H1 (cell line): ENCODE measurements at regions of chr12 and their contacts with region 1.

Region 1: DNA sequence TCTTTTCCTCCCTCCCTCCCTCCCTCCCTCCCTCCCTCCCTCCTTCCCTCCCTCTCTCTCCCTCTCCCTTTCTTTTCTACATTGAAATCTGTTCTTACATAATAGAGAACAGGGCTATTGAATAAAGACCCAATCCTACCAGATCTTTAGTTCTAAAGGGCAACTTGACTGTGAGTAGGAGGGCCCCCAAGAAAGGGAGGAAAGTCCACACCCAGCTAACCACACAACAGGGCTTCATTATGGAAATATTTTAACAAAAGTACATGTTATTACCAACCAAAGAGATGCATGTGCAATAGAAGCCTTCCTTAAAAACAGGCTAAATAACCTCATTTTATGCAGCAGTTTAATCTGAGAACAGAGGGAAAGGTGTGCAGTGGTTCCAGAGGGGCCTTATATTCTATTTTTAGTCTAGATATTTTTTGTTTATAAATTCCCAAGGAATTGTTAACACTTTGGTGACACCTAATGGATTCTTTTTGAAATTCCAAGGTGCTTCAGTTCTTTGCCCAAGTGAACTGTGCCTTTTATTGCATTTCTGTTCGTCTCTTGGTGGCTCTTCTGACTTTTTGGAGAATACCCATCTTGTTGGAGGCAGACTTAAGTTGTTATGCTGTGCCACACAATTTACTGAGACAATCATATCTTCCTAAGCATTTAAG is 63.0 kb downstream of the GNS start:
- DNase-seq: no peak
- H3K4me3 ChIP-seq: no peak overlapping the region
- H3K27ac ChIP-seq: no peak overlapping the region
- H3K4me1 ChIP-seq: peaks cover 4 to 30% (median 20%) of the 10 kb centered on the region in 4 experiments
- H3K27me3 ChIP-seq: no peaks in the 10 kb centered on the region
- CTCF ChIP-seq: peak in 2 of 3 experiments; percentile 5 to 19; a peak in 1 of 4 replicates
- EP300 ChIP-seq: no peak
- POLR2A ChIP-seq: no peak
- RAD21 ChIP-seq: peak; percentile 48 to 60

Region 2: DNA sequence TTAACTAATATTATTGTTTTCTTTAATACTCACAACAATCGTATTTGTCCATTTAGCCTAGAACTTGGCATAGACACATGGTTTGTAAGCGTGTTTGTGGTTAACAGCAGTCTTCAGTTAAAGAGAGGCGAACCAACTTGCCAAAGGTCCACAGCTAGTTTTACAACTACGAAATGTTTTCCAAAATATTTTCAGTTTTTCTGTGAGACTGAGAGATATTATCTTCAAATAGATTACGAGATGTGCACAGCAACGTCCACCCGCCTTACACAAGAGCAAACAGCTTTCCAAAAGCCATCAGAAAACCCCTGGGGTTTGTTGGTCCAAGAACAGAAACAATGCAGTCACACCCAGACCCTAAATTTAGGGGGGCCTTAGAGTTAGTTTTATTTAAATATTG is 144.5 kb before region 1 on chr12:
- CTCF ChIA-PET with region 1: interaction called, 132 read pairs
- POLR2A ChIA-PET with region 1: no interaction called
- DNase-seq: no peak
- H3K4me3 ChIP-seq: no peak overlapping the region
- H3K27ac ChIP-seq: no peak overlapping the region
- H3K4me1 ChIP-seq: no peaks in the 10 kb centered on the region; a peak in 3 of 7 replicates
- H3K27me3 ChIP-seq: no peaks in the 10 kb centered on the region
- CTCF ChIP-seq: no peak
- EP300 ChIP-seq: no peak
- POLR2A ChIP-seq: no peak
- RAD21 ChIP-seq: no peak

Region 3: GRCh38 chr12:64566732-64567399 is 129.3 kb before region 1 on chr12:
- CTCF ChIA-PET with region 1: interaction called, 33 read pairs
- POLR2A ChIA-PET with region 1: interaction called, 3 read pairs
- DNase-seq: peak in 1 of 2 experiments; percentile 48
- H3K4me3 ChIP-seq: no peak overlapping the region
- H3K27ac ChIP-seq: no peak overlapping the region
- H3K4me1 ChIP-seq: peaks cover 5 to 15% (median 11%) of the 10 kb centered on the region in 4 experiments; a peak in 6 of 7 replicates
- H3K27me3 ChIP-seq: no peaks in the 10 kb centered on the region
- CTCF ChIP-seq: no peak
- EP300 ChIP-seq: no peak
- POLR2A ChIP-seq: no peak
- RAD21 ChIP-seq: no peak

Region 4: DNA sequence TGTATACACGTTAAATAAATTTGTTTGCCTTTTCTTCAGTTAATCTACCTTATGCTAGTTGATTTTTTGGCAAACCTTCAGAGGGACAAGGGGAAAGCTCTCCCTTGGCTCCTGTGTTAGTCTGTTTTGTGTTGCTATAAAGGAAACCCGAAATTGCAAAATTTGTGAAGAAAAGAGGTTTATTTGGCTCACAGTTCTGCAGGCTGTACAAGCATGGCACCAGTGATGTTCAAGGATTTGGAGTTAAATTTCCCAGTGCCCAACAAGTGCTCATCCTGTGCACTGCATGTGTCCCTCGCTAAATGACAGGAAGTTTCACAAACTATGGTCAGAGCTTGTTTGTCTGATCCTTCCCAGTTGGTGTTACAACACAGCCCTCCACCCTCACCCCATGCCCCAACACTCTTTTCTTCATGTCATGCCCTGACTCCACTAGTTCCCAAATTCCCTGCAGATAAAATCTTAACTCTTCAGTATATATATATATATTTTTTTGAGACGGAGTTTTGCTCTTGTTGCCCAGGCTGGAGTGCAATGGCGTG is 99.9 kb before region 1 on chr12:
- CTCF ChIA-PET with region 1: interaction called, 12 read pairs
- POLR2A ChIA-PET with region 1: no interaction called
- DNase-seq: no peak
- H3K4me3 ChIP-seq: no peak overlapping the region
- H3K27ac ChIP-seq: no peak overlapping the region
- H3K4me1 ChIP-seq: no peaks in the 10 kb centered on the region
- H3K27me3 ChIP-seq: no peaks in the 10 kb centered on the region
- CTCF ChIP-seq: no peak
- EP300 ChIP-seq: no peak
- POLR2A ChIP-seq: no peak
- RAD21 ChIP-seq: no peak

Region 5: DNA sequence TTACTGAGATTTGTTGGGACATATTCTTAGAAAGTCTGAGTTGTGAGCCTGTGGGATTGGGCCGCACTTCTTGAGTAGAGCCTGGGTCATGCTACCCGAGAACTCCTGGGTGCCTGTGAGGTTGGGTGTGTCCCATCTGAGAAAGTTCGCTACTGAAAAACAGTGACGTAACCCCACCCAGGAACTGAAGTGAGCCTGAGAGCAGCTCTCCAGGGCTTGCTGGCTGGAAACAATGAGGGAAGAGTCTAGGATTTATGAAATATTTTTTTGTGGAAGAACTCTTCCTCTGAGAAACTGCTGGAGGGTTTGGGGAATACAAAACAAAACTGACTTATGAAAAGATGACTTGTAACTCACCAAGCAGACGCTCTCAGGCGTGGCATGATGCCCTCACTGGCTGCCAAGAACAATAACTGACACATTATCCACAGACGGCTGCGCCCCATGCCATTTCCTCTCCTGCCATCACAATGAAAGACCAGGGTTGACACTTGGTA is 16.7 kb before region 1 on chr12:
- CTCF ChIA-PET with region 1: interaction called, 39 read pairs
- POLR2A ChIA-PET with region 1: interaction called, 3 read pairs
- DNase-seq: no peak
- H3K4me3 ChIP-seq: no peak overlapping the region
- H3K27ac ChIP-seq: no peak overlapping the region
- H3K4me1 ChIP-seq: peaks cover 2 to 16% (median 7%) of the 10 kb centered on the region in 4 experiments; a peak in 6 of 7 replicates
- H3K27me3 ChIP-seq: no peaks in the 10 kb centered on the region
- CTCF ChIP-seq: no peak
- EP300 ChIP-seq: no peak
- POLR2A ChIP-seq: no peak
- RAD21 ChIP-seq: no peak

Region 6: GRCh38 chr12:64716371-64716770 is 20.2 kb after region 1 on chr12:
- CTCF ChIA-PET with region 1: interaction called, 15 read pairs
- POLR2A ChIA-PET with region 1: no interaction called
- DNase-seq: no peak
- H3K4me3 ChIP-seq: no peak overlapping the region
- H3K27ac ChIP-seq: no peak overlapping the region
- H3K4me1 ChIP-seq: no peaks in the 10 kb centered on the region
- H3K27me3 ChIP-seq: no peaks in the 10 kb centered on the region
- CTCF ChIP-seq: no peak
- EP300 ChIP-seq: no peak
- POLR2A ChIP-seq: no peak
- RAD21 ChIP-seq: no peak

Region 7: DNA sequence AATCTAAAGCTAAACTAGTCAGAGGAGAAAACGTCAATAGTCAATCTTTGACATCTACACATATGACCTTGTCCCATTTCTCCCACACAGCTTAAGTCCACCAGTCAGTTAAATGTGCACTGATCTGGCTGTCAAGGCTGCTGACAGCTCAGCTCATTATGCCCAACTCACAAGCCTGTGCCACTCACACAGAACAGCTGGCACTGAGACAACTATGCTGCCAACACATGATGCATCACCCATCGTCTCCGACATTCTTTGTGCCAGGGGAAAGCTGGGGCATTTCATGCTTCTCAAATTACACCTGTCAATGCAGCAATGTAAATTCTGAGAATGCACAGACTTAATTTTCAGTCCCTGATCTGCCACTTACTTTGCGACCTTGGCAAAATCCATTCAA is 37.6 kb after region 1 on chr12:
- CTCF ChIA-PET with region 1: no interaction called
- POLR2A ChIA-PET with region 1: no interaction called
- DNase-seq: no peak
- H3K4me3 ChIP-seq: no peak overlapping the region
- H3K27ac ChIP-seq: no peak overlapping the region
- H3K4me1 ChIP-seq: no peaks in the 10 kb centered on the region
- H3K27me3 ChIP-seq: no peaks in the 10 kb centered on the region
- CTCF ChIP-seq: no peak
- EP300 ChIP-seq: no peak
- POLR2A ChIP-seq: no peak
- RAD21 ChIP-seq: no peak

Region 8: GRCh38 chr12:64877363-64878004 is 181.3 kb after region 1 on chr12:
- CTCF ChIA-PET with region 1: no interaction called
- POLR2A ChIA-PET with region 1: no interaction called
- DNase-seq: no peak
- H3K4me3 ChIP-seq: no peak overlapping the region
- H3K27ac ChIP-seq: no peak overlapping the region
- H3K4me1 ChIP-seq: no peaks in the 10 kb centered on the region
- H3K27me3 ChIP-seq: no peaks in the 10 kb centered on the region
- CTCF ChIP-seq: no peak
- EP300 ChIP-seq: no peak
- POLR2A ChIP-seq: no peak
- RAD21 ChIP-seq: no peak